Right cardiac atrium (tissue), 5 donors: ENCODE measurements at regions of chr2 and their contacts with region 1.

Region 1: DNA sequence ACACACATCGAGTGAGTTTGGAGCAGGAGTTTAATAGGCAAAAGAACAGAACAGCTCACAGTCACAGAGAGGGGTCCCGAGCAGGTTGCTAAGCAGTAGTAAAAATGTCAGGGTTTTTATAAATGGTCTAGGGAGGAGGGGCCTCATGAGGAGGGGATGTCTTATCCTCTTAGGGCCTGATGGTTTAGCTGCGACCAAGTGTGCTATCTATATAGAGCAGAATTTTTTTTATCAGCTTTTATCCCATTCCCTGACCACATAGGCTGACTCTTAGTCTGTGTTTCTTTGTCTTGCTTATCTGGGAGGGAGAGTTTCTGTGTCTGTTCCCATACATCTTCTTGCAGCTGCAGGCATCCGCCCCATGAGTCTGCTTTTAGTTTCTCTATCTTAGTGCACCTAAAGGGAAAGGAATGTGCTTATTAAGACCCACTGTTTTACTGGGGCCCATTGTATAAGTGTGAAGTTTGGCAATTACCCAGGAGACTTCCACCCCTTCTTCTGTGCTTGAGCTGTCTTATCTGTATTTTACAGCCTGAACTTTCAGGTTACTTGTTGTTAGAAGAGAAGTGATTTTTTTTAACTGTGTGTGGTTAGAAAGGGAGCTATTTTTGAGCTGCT is 30.4 kb upstream of the GMCL1 start:
- DNase-seq: no peak
- ATAC-seq: peak; percentile 44 to 74
- H3K4me3 ChIP-seq: peak overlapping the region; percentile 23
- H3K27ac ChIP-seq: peak overlapping the region; percentile 42
- H3K4me1 ChIP-seq: peaks cover 4% of the 10 kb centered on the region
- H3K27me3 ChIP-seq: no peaks in the 10 kb centered on the region

Region 2: DNA sequence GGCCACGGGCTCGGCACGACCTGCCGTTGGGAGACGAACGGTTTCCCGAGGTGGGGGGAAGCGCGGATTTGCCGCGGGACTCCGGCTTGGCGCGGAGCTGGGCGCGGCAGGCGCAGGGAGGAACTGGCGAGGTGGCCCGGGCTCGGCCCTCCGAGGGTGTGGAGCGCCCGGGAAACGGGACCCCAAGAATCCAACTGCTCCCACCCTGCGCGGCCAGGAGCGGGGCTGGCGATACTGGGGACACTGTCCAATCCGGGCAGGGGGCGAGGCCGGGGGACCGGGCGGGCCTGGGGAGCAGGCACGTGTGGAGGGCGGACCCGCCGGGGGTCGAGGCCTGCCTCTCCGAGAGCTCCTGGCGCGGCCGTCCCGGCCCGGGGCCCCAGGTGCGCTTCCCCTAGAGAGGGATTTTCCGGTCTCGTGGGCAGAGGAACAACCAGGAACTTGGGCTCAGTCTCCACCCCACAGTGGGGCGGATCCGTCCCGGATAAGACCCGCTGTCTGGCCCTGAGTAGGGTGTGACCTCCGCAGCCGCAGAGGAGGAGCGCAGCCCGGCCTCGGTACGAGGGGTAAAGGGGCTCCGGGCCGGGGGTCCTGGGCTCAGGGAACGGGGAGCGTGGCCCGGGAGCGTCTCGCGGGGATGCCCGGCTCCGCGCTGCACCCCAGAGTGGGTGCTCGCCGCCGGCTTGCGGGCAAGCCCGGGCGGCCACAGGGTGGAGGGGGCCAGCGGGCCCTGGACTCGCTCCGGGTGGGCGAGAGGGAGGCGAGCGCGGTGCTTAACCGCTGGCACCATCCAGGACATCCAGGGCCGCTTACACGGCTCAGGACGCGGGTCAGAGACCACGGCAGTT is 57.2 kb before region 1 on chr2 and contains the start of gene ANXA4:
- intact Hi-C with region 1: loop called in 1 of 4 experiments (anchors 10 kb)
- DNase-seq: peak; percentile 83 to 94 (median 88)
- ATAC-seq: peak; percentile 95 to 97
- H3K4me3 ChIP-seq: peak within 1 kb of the TSS; percentile 81
- H3K27ac ChIP-seq: peak within 1 kb of the TSS; percentile 22
- H3K4me1 ChIP-seq: peaks cover 2% of the 10 kb centered on the region
- H3K27me3 ChIP-seq: no peaks in the 10 kb centered on the region
- total RNA-seq, gene ANXA4: 27.1 to 43.7 (median 33.9) TPM